ENCODE measurements at regions of chr16 and their contacts with region 1.

Region 1: DNA sequence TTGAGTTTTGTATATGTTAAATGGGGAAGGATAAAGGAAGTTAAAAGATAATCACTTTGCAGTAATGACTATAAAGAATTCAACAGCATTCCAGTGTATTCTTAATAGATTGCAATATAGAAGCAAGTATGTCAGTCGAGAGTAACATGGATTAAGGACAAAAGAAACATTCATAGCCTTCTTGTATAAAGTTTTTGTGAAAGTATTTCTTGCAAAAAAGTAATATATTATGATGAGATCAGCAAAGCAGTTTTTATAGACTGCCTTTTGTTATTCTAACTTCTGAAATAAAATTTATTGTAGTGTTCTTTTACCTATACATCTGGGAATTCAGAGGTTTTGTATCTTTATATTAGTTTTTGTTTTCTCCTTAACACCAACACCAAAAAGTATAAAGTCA is 184.9 kb upstream of the RBL2 start:
- DNase-seq: no peak
- H3K4me3 ChIP-seq: no peak overlapping the region
- H3K27ac ChIP-seq: no peak overlapping the region
- H3K4me1 ChIP-seq: no peaks in the 10 kb centered on the region
- H3K27me3 ChIP-seq: no peaks in the 10 kb centered on the region
- CTCF ChIP-seq: no peak

Region 2: GRCh38 chr16:53220585-53220984 is 28.7 kb before region 1 on chr16:
- CTCF ChIA-PET with region 1: interaction called, 12 read pairs
- dilution Hi-C with region 1: no loop called
- in situ Hi-C with region 1: no loop called
- intact Hi-C with region 1: no loop called
- DNase-seq: no peak
- H3K4me3 ChIP-seq: no peak overlapping the region
- H3K27ac ChIP-seq: no peak overlapping the region
- H3K4me1 ChIP-seq: peaks cover 4% of the 10 kb centered on the region
- H3K27me3 ChIP-seq: no peaks in the 10 kb centered on the region
- CTCF ChIP-seq: peak in 1 of 2 donors; percentile 11